ENCODE measurements at regions of chr7 and their contacts with region 1.

Region 1: DNA sequence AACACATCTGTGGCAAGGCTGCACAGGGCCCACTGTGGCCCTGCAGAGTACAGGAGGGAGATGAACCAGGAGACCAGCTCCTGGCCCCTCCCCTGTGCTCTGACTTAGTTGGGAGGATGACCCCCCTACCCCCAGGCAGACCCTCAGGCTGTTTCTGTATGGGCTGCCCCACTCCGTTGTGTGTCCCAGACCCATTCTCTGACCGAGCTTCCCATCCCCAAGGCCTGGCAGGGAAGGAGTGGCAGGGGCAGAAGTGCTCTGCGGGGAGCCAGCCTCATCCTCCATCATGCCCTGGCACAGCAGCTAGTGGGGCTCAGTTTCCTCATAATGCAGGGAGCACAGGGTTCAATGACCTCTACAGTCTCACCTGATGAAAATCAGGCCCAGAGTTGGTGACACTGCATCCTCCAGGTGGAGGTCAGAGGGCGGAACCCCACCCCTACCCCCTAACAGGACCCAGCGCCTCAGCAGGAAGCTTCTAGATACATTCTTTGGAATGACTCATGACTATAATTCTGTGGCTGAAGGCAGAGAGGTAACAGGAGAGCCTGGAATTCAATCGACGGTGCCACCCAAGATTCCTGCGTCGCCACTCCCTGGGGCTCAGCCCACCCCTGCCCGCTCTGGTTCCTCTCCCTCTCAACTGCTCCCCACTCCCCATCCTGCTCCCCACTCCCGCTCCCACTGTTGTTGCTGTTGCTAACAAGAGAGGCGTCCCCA is 18.2 kb downstream of the PODXL start:
- DNase-seq: no peak
- ATAC-seq: peak; percentile 81 to 83 (median 82)
- H3K4me3 ChIP-seq: no peak overlapping the region
- H3K27ac ChIP-seq: peak overlapping the region; percentile 71
- H3K4me1 ChIP-seq: peaks cover 43% of the 10 kb centered on the region
- H3K27me3 ChIP-seq: no peaks in the 10 kb centered on the region
- CTCF ChIP-seq: no peak

Region 2: GRCh38 chr7:131513245-131514061 is 24.8 kb before region 1 on chr7:
- intact Hi-C with region 1: loop called in 1 of 2 experiments (anchors 2 kb)
- DNase-seq: peak; percentile 84 to 91
- ATAC-seq: peak; percentile 96 to 98 (median 96)
- H3K4me3 ChIP-seq: no peak overlapping the region
- H3K27ac ChIP-seq: peak overlapping the region; percentile 70
- H3K4me1 ChIP-seq: peaks cover 17% of the 10 kb centered on the region
- H3K27me3 ChIP-seq: no peaks in the 10 kb centered on the region
- CTCF ChIP-seq: peak; percentile 94

Region 3: DNA sequence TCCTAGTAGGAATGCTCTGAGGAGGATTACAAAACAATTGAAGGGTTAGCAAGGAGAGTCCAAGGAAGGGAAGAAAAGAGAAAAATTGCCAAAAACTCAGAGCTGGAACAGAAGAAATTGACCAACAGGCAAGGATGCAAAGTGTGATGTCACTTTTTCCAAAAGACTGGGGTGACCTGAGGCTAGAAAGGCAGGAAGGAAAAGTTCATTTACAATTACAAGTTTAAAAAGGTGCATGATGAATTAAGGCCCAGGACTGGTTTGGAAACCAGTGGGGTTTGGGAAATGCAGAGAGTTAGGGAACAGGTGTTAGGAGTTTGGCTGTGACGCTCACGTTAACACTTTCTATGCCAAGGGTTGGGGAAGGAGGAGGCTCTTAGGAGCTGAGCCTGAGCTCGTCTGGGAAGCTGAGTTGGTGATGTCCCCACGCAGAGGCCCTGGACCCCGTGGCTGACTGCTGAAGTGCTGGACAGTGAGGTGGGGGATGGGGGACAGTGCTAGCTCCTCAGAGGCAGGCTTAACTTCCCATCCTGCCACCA is 110.8 kb after region 1 on chr7:
- intact Hi-C with region 1: no loop called
- DNase-seq: peak in 1 of 2 donors; percentile 43
- ATAC-seq: peak in 2 of 4 donors; percentile 37 to 42
- H3K4me3 ChIP-seq: no peak overlapping the region
- H3K27ac ChIP-seq: no peak overlapping the region
- H3K4me1 ChIP-seq: no peaks in the 10 kb centered on the region
- H3K27me3 ChIP-seq: no peaks in the 10 kb centered on the region
- CTCF ChIP-seq: no peak

Measured in psoas muscle (tissue), 8 donors.